Naive thymus-derived CD4-positive, alpha-beta T cell (primary cell): ENCODE measurements at regions of chr5 and their contacts with region 1.

Region 1: GRCh38 chr5:154202379-154203260 is 12.1 kb downstream of the GALNT10 start:
- DNase-seq: peak in 3 of 9 donors; percentile 26 to 52 (median 47)
- ATAC-seq: peak; percentile 71
- H3K4me3 ChIP-seq: peak overlapping the region; percentile 31
- H3K4me3 Mint-ChIP-seq: peak overlapping the region; percentile 24 to 87 (median 71)
- H3K27ac ChIP-seq: peak overlapping the region; percentile 66
- H3K27ac Mint-ChIP-seq: peak overlapping the region; percentile 49 to 97 (median 90)
- H3K4me1 ChIP-seq: peaks cover 26 to 32% of the 10 kb centered on the region in 2 donors
- H3K4me1 Mint-ChIP-seq: peaks cover 36 to 74% (median 45%) of the 10 kb centered on the region in 7 donors
- H3K27me3 ChIP-seq: no peaks in the 10 kb centered on the region
- H3K27me3 Mint-ChIP-seq: no peaks in the 10 kb centered on the region

Region 2: GRCh38 chr5:153551537-153552079 is 651.0 kb before region 1 on chr5:
- CTCF ChIA-PET with region 1: no interaction called
- POLR2A ChIA-PET with region 1: no interaction called
- intact Hi-C with region 1: no loop called
- DNase-seq: no peak
- ATAC-seq: no peak
- H3K4me3 ChIP-seq: no peak overlapping the region
- H3K4me3 Mint-ChIP-seq: no peak overlapping the region
- H3K27ac ChIP-seq: no peak overlapping the region
- H3K27ac Mint-ChIP-seq: no peak overlapping the region
- H3K4me1 ChIP-seq: peaks cover 0 to 4% of the 10 kb centered on the region in 2 donors
- H3K4me1 Mint-ChIP-seq: peaks cover 4 to 13% (median 9%) of the 10 kb centered on the region in 7 donors
- H3K27me3 ChIP-seq: no peaks in the 10 kb centered on the region
- H3K27me3 Mint-ChIP-seq: no peaks in the 10 kb centered on the region

Region 3: GRCh38 chr5:154058055-154059038 is 144.3 kb before region 1 on chr5:
- CTCF ChIA-PET with region 1: no interaction called
- POLR2A ChIA-PET with region 1: no interaction called
- intact Hi-C with region 1: no loop called
- DNase-seq: no peak
- ATAC-seq: peak; percentile 38
- H3K4me3 ChIP-seq: no peak overlapping the region
- H3K4me3 Mint-ChIP-seq: no peak overlapping the region
- H3K27ac ChIP-seq: no peak overlapping the region
- H3K27ac Mint-ChIP-seq: peak overlapping the region in 3 of 9 donors; percentile 22 to 65 (median 38)
- H3K4me1 ChIP-seq: no peaks in the 10 kb centered on the region
- H3K4me1 Mint-ChIP-seq: peaks cover 9 to 26% (median 15%) of the 10 kb centered on the region in 7 donors
- H3K27me3 ChIP-seq: no peaks in the 10 kb centered on the region
- H3K27me3 Mint-ChIP-seq: no peaks in the 10 kb centered on the region

Region 4: GRCh38 chr5:154221371-154221896 is 18.8 kb after region 1 on chr5:
- CTCF ChIA-PET with region 1: no interaction called
- POLR2A ChIA-PET with region 1: interaction called, 3 read pairs
- intact Hi-C with region 1: loop called (anchors 1 to 2 kb)
- DNase-seq: peak in 8 of 9 donors; percentile 29 to 63 (median 46)
- ATAC-seq: peak; percentile 91
- H3K4me3 ChIP-seq: no peak overlapping the region
- H3K4me3 Mint-ChIP-seq: peak overlapping the region in 7 of 10 donors; percentile 2 to 71 (median 53)
- H3K27ac ChIP-seq: peak overlapping the region; percentile 51
- H3K27ac Mint-ChIP-seq: peak overlapping the region; percentile 83 to 98 (median 94)
- H3K4me1 ChIP-seq: peaks cover 6 to 10% of the 10 kb centered on the region in 2 donors
- H3K4me1 Mint-ChIP-seq: peaks cover 24 to 68% (median 36%) of the 10 kb centered on the region in 7 donors
- H3K27me3 ChIP-seq: no peaks in the 10 kb centered on the region
- H3K27me3 Mint-ChIP-seq: no peaks in the 10 kb centered on the region